MCF 10A (cell line): ENCODE measurements at regions of chr4 and their contacts with region 1.

Region 1: GRCh38 chr4:55184600-55185523 is 59.5 kb upstream of the KDR start:
- DNase-seq: peak; percentile 47
- H3K4me3 Mint-ChIP-seq: no peak overlapping the region
- H3K27ac Mint-ChIP-seq: peak overlapping the region; percentile 84
- H3K4me1 Mint-ChIP-seq: peaks cover 29% of the 10 kb centered on the region
- H3K27me3 Mint-ChIP-seq: no peaks in the 10 kb centered on the region
- CTCF ChIP-seq: peak; percentile 37

Region 2: GRCh38 chr4:54999003-54999402 is 185.9 kb before region 1 on chr4:
- CTCF ChIA-PET with region 1: interaction called, 21 read pairs
- POLR2A ChIA-PET with region 1: interaction called, 3 read pairs
- intact Hi-C with region 1: no loop called
- DNase-seq: peak; percentile 47
- H3K4me3 Mint-ChIP-seq: no peak overlapping the region
- H3K27ac Mint-ChIP-seq: no peak overlapping the region
- H3K4me1 Mint-ChIP-seq: peaks cover 26% of the 10 kb centered on the region
- H3K27me3 Mint-ChIP-seq: no peaks in the 10 kb centered on the region
- CTCF ChIP-seq: peak; percentile 47

Region 3: GRCh38 chr4:55032788-55033187 is 152.1 kb before region 1 on chr4:
- CTCF ChIA-PET with region 1: interaction called, 6 read pairs
- POLR2A ChIA-PET with region 1: interaction called, 15 read pairs
- intact Hi-C with region 1: no loop called
- DNase-seq: no peak
- H3K4me3 Mint-ChIP-seq: no peak overlapping the region
- H3K27ac Mint-ChIP-seq: peak overlapping the region; percentile 49
- H3K4me1 Mint-ChIP-seq: peaks cover 71% of the 10 kb centered on the region
- H3K27me3 Mint-ChIP-seq: no peaks in the 10 kb centered on the region
- CTCF ChIP-seq: no peak

Region 4: DNA sequence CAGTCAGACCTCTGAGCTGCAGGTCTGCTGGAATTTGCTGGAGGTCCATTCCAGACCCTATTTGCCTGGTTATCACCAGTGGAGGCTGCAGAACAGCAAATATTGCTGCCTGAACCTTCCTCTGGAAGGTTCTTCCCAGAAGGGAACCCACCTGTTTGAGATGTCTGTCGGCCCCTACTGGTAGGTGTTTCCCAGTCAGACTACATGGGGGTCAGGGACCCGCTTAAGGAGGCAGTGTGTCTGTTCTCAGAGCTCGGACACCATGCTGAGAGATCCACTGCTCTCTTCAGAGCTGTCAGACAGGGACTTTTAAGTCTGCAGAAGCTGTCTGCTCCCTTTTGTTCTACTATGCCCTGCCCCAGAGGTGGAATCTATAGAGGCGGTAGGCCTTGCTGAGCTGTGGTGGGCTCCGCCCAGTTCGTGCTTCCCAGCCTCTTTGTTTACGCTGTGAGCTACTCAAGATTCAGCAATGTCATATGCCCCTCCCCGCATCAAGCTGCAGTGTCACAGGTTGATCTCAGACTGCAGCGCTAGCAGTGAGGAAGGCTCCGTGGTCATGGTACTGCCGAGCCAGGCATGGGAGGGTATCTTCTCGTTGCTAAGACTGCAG is 15.4 kb before region 1 on chr4:
- CTCF ChIA-PET with region 1: interaction called, 12 read pairs
- POLR2A ChIA-PET with region 1: interaction called, 16 read pairs
- intact Hi-C with region 1: no loop called
- DNase-seq: peak; percentile 47
- H3K4me3 Mint-ChIP-seq: no peak overlapping the region
- H3K27ac Mint-ChIP-seq: no peak overlapping the region
- H3K4me1 Mint-ChIP-seq: peaks cover 18% of the 10 kb centered on the region
- H3K27me3 Mint-ChIP-seq: no peaks in the 10 kb centered on the region
- CTCF ChIP-seq: no peak

Region 5: GRCh38 chr4:55312489-55313101 is 127.7 kb after region 1 on chr4:
- CTCF ChIA-PET with region 1: interaction called, 16 read pairs
- POLR2A ChIA-PET with region 1: no interaction called
- intact Hi-C with region 1: no loop called
- DNase-seq: peak; percentile 65
- H3K4me3 Mint-ChIP-seq: no peak overlapping the region
- H3K27ac Mint-ChIP-seq: no peak overlapping the region
- H3K4me1 Mint-ChIP-seq: no peaks in the 10 kb centered on the region
- H3K27me3 Mint-ChIP-seq: no peaks in the 10 kb centered on the region
- CTCF ChIP-seq: peak; percentile 52

Region 6: GRCh38 chr4:55444827-55445226 is 260.0 kb after region 1 on chr4:
- CTCF ChIA-PET with region 1: no interaction called
- POLR2A ChIA-PET with region 1: no interaction called
- intact Hi-C with region 1: no loop called
- DNase-seq: peak; percentile 43
- H3K4me3 Mint-ChIP-seq: no peak overlapping the region
- H3K27ac Mint-ChIP-seq: no peak overlapping the region
- H3K4me1 Mint-ChIP-seq: peaks cover 6% of the 10 kb centered on the region
- H3K27me3 Mint-ChIP-seq: no peaks in the 10 kb centered on the region
- CTCF ChIP-seq: peak; percentile 55